Sigmoid colon (tissue), 7 donors: ENCODE measurements at regions of chr12 and their contacts with region 1.

Region 1: GRCh38 chr12:8081251-8081920 is 688 bp upstream of the NECAP1 start:
- DNase-seq: no peak
- H3K4me3 ChIP-seq: peak overlapping the region; percentile 63 to 89 (median 86)
- H3K27ac ChIP-seq: peak overlapping the region; percentile 87 to 93 (median 91)
- H3K4me1 ChIP-seq: peaks cover 0 to 32% (median 22%) of the 10 kb centered on the region in 4 donors
- H3K27me3 ChIP-seq: no peaks in the 10 kb centered on the region
- CTCF ChIP-seq: no peak
- EP300 ChIP-seq: no peak
- POLR2A ChIP-seq: no peak

Region 2: DNA sequence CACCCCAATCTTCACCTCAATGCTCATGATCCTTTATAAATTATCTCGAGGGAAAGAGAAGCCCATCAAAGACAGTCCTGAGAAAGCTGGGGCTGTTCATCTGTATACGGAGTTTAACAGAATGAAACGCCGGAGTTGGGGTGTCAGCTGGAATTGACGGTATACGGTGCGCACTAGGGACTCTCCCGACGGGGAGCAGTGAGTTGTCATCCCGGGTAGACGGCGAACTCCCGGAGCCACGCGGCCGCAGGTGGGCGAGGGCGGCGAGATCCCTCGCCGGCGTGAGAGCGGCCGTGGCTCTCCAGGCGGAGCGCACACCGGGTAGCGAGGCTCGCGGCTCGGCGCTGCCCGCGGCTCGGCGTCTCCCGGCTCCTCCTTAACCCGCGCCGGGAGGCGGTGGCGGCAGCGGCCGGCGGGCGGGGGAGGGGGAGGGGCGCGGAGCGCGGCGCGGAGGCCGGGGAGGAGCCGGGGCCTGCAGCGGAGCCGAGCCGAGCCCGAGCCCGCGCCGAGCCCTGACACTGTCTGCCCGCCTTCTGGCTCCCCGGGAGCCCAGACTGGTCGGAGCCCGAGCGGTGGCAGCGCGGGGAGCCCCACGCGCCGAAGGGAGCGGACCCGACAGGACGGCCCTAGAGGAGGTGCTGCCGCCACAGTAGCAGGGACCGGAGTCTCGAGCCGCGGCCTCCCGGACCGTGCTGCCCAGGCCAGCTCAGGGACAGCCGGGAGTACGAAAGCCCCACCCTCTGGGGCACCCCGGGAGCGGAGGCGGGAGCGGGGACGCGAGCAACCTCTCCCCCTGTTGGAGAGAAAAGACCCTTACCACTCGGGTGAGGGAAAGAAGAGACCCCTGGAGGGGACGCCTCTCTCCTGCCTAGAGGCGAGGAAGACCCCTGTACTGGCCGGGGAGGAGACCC is 48.9 kb before region 1 on chr12 and contains the start of gene FOXJ2:
- intact Hi-C with region 1: loop called (anchors 2 kb)
- DNase-seq: peak; percentile 90
- H3K4me3 ChIP-seq: peak within 1 kb of the TSS; percentile 69 to 94 (median 92)
- H3K27ac ChIP-seq: peak within 1 kb of the TSS; percentile 94 to 98 (median 98)
- H3K4me1 ChIP-seq: peaks cover 0 to 50% (median 49%) of the 10 kb centered on the region in 4 donors
- H3K27me3 ChIP-seq: no peaks in the 10 kb centered on the region
- CTCF ChIP-seq: no peak
- EP300 ChIP-seq: no peak
- POLR2A ChIP-seq: peak; percentile 55 to 77
- total RNA-seq, gene FOXJ2: 12.5 to 17.1 (median 15.7) TPM

Region 3: GRCh38 chr12:8045952-8046944 is 35.1 kb before region 1 on chr12:
- intact Hi-C with region 1: loop called (anchors 5 kb)
- DNase-seq: peak; percentile 81
- H3K4me3 ChIP-seq: no peak overlapping the region
- H3K27ac ChIP-seq: no peak overlapping the region
- H3K4me1 ChIP-seq: peaks cover 0 to 6% (median 0%) of the 10 kb centered on the region in 4 donors
- H3K27me3 ChIP-seq: no peaks in the 10 kb centered on the region
- CTCF ChIP-seq: peak; percentile 32 to 92 (median 66)
- EP300 ChIP-seq: no peak
- POLR2A ChIP-seq: no peak